PC-9 (cell line): ENCODE measurements at regions of chr13 and their contacts with region 1.

Region 1: DNA sequence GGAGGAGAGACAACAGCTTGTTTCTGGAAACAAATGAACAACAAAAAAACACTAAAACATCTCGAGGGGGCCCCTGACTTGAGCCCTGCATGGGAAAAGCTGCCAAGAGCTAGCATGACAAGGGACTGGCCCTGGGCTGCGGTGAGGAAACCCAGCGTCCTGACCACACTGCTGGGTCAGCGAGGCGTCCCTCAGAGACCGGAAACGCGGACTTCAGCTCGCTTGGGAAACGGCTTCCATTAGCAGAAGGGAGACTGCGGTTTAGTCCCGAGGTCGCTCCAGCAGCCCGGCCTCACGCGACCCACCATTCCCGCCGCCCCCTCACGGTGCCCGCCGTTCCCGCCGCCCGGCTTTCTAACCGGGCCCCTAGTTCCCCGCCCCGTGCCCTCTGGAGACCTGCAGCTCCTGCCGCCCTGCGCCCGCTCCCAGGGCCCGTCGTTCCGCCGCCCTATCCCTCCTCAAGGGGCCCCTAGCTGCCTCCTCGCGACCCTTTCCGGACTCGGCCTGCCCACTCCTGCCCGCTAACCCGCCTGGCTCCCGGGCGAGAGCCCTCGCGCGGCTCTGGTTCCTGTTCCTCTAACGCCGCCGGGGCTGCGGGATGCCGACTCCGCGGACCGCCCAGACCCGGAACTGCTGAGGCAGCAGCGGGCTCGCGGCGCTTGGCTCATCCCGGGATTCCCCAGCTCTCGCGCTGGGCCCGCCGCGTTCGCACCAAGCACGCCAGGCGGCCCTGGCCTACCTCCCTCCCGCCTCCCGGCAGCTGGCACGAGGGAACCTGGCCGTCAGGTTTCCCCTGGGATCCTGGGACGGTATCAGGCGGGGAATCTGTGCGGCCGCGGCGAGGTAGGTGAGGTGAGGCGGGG is at the start of gene CCDC122:
- DNase-seq: peak; percentile 61 to 74
- H3K4me3 ChIP-seq: peak within 1 kb of the TSS; percentile 59
- H3K27ac ChIP-seq: peak within 1 kb of the TSS; percentile 78
- H3K4me1 ChIP-seq: 0 out of 2 replicates have a peak, but pooled peaks cover 27% of the 10 kb centered on the region
- H3K27me3 ChIP-seq: no peaks in the 10 kb centered on the region
- CTCF ChIP-seq: no peak
- total RNA-seq, gene CCDC122: 7.4 and 7.9 TPM in 2 replicates

Region 2: DNA sequence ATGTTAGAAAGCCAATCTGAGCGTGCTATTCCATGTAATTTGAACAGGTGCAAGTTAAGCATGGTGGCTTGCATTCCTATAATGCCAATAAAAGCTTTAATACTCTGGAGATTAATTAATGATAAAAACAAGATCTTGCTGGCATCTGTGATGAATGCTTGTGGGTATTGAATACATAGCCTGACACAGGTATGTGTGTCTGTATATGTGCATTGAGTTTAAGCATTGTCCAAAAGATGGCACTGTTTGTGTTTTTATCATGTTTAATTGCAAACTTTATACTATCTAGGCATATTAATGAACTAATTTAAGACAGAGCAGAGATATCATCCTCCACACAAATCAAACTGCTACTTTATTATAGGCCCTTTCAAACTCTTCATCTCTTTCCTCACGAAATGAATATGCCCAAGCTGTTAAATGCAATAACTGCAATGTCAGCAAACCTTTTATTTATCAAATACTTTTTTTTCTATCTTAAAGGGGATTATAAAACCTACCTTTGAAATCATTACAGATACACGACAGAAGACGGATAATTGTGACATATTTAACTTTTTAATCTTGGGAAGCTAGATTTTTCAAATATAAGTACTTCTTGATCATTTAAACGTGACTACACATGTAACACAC is 1218.7 kb before region 1 on chr13:
- CTCF ChIA-PET with region 1: no interaction called
- POLR2A ChIA-PET with region 1: no interaction called
- intact Hi-C with region 1: loop called (anchors 10 kb)
- DNase-seq: no peak
- H3K4me3 ChIP-seq: no peak overlapping the region
- H3K27ac ChIP-seq: no peak overlapping the region
- H3K4me1 ChIP-seq: no peaks in the 10 kb centered on the region
- H3K27me3 ChIP-seq: no peaks in the 10 kb centered on the region
- CTCF ChIP-seq: peak; percentile 49; the same call in 1 of the 2 replicates

Region 3: GRCh38 chr13:43085545-43085944 is 793.6 kb before region 1 on chr13:
- CTCF ChIA-PET with region 1: no interaction called
- POLR2A ChIA-PET with region 1: no interaction called
- intact Hi-C with region 1: loop called (anchors 5 kb)
- DNase-seq: no peak
- H3K4me3 ChIP-seq: no peak overlapping the region
- H3K27ac ChIP-seq: no peak overlapping the region
- H3K4me1 ChIP-seq: no peaks in the 10 kb centered on the region
- H3K27me3 ChIP-seq: no peaks in the 10 kb centered on the region
- CTCF ChIP-seq: peak; percentile 75

Region 4: DNA sequence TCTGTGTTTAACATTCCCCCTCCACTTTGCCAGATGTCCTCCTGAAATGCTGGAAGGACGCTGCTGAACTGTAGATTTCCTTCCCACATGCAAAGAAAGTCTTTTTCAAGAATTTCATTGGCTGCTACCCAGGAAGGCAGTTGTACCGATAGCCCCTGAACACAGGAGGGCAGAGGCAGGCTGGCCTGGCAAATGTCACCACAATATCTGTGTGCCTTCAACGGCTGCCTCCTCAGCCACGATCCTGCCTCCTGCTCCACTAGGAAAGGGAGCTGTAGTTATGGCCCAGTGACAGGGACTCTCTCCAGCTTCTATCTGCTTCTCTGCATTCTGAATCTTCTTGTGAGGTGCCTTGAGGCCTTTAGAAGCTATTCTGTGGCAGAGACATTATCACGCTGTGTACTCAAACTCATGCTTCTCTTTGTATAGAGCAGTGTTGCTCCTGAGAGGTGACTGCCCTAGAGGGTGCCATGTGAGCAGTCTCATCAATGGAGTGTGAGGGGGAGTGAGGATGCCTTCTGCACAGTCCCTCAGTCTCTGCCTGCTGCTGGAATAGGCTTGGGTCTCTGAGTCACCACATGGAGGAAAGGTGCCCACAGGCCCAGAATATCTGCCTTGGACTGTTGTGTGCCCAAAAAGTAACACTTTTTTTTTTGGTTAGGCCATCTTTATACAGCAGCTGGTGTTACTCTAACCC is 575.9 kb before region 1 on chr13:
- CTCF ChIA-PET with region 1: no interaction called
- POLR2A ChIA-PET with region 1: no interaction called
- intact Hi-C with region 1: loop called (anchors 10 kb)
- DNase-seq: peak in 1 of 2 experiments; percentile 39
- H3K4me3 ChIP-seq: no peak overlapping the region
- H3K27ac ChIP-seq: no peak overlapping the region
- H3K4me1 ChIP-seq: no peaks in the 10 kb centered on the region
- H3K27me3 ChIP-seq: no peaks in the 10 kb centered on the region
- CTCF ChIP-seq: peak; percentile 53; the same call in 1 of the 2 replicates

Region 5: GRCh38 chr13:43804461-43805070 is 74.6 kb before region 1 on chr13:
- CTCF ChIA-PET with region 1: interaction called, 4 read pairs
- POLR2A ChIA-PET with region 1: no interaction called
- intact Hi-C with region 1: loop called (anchors 5 kb)
- DNase-seq: peak; percentile 12 to 45
- H3K4me3 ChIP-seq: no peak overlapping the region
- H3K27ac ChIP-seq: peak overlapping the region; percentile 67
- H3K4me1 ChIP-seq: peaks cover 25% of the 10 kb centered on the region
- H3K27me3 ChIP-seq: no peaks in the 10 kb centered on the region
- CTCF ChIP-seq: peak; percentile 72

Region 6: GRCh38 chr13:44710576-44710975 is 831.5 kb after region 1 on chr13:
- CTCF ChIA-PET with region 1: no interaction called
- POLR2A ChIA-PET with region 1: no interaction called
- intact Hi-C with region 1: no loop called
- DNase-seq: peak; percentile 48 to 89
- H3K4me3 ChIP-seq: no peak overlapping the region
- H3K27ac ChIP-seq: peak overlapping the region; percentile 94
- H3K4me1 ChIP-seq: peaks cover 60% of the 10 kb centered on the region
- H3K27me3 ChIP-seq: no peaks in the 10 kb centered on the region
- CTCF ChIP-seq: no peak